AG04449 (cell line): ENCODE measurements at regions of chr16 and their contacts with region 1.

Region 1: GRCh38 chr16:72818236-72818845 is 229.6 kb downstream of the ZFHX3 start:
- DNase-seq: no peak
- H3K4me3 ChIP-seq: no peak overlapping the region
- CTCF ChIP-seq: no peak

Region 2: DNA sequence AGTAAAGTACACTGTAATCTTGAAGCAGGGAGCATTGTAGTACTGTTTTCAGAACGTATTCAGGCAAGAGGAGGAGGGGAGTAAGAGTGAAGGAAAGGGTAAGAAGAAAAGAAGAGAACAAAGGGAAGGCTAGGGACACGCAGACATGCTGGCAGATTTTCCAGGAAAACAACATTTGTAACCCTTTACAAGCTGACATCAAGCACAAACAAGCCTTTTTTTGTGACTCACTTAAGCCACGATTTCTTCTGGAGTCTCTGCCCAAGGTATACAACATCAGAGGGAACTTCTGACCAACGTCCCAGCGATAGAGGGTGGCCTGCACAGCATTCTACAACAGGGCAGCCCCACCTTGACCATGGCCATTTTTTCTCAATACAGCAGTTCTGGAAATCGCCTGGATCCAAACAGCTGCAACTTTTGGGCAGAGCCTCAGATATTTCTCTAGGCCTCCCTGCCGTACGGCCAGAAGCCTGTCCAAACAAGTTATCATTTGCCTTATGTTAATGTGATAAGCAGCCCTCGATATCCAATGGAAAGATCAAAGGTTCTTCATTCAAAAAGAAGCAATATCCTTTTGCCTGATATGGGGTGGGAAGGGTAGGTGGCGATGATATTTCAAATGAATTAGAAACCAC is 17.7 kb before region 1 on chr16:
- CTCF ChIA-PET with region 1: interaction called, 10 read pairs
- POLR2A ChIA-PET with region 1: no interaction called
- DNase-seq: no peak
- H3K4me3 ChIP-seq: no peak overlapping the region
- CTCF ChIP-seq: no peak

Region 3: DNA sequence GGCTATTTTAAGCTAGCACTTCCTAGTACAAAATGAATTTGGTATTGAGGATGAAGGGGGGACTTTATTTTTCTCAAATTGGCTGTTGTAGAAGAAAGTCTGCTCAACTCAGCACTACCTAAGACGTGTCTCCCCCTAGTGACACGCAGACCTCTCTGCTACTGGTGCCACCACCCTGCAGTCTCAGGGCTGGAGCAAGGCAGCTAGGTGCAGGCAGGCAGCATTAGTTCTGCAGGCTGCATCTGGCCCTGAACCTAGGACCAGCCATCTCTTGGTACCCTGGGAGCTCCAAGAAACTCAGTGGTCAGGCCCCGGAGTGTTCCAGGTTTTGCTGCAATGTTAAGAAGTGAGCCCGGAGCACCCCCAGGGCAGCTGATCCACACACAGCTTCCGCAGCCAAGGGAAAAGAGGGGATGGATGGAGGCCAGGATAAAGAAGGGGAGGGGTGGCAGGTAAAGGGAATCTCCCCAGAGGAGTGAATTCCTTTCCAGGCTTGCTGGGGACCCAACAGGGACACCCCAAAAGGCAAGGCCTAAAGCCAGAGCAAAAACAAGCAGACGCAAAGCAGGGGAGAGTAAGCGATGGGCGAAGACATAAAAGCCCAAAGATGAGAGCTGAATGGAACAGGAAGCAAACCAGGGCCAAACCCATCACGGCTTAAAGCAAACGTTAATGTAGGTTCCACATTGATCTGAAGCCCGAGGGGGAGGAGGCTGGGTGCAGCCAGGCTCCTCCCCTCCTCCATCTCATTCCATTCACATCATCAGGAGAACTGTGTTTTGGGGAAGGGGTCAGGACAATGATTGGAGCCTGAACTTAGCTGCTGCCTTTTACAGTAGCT is 29.1 kb after region 1 on chr16:
- CTCF ChIA-PET with region 1: no interaction called
- POLR2A ChIA-PET with region 1: no interaction called
- DNase-seq: no peak
- H3K4me3 ChIP-seq: no peak overlapping the region
- CTCF ChIP-seq: peak; percentile 70